CD4-positive, alpha-beta T cell (primary cell): ENCODE measurements at regions of chr18 and their contacts with region 1.

Region 1: DNA sequence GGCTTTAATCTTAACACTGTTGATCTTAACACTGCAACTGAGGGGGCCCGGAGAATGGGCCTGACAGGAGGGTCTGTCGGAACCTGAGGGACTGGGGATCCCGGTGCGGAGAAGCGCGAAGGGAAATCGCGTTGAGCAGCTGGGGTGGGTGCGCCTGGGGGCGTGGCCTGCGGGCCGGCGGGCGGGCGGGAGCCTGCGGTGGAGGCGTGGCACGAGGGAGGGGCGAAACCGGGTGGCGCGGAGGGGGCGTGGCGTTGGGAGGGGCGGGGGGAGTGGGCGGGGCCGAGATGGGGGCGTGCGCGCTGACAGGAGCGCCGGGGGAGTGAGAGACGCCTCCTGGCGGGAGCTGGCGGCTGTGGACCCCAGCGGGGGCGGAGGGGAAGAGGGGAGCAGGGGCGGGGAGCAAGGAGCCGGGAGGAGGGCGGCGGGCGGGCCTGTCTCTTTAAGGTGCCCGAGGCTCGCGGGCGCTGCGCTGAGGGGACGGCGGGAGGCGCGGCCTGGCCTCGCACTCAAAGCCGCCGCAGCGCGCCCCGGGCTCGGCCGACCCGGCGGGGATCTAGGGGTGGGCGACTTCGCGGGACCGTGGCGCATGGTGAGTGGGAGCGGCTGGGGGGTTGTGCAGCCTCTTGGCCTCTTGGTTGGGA is at the start of gene TWSG1:
- DNase-seq: peak; percentile 89 to 96 (median 93)
- ATAC-seq: peak; percentile 88
- H3K4me3 ChIP-seq: peak within 1 kb of the TSS; percentile 80
- H3K4me3 Mint-ChIP-seq: peak within 1 kb of the TSS; percentile 95
- H3K27ac ChIP-seq: peak within 1 kb of the TSS; percentile 36 to 40
- H3K27ac Mint-ChIP-seq: peak within 1 kb of the TSS; percentile 88
- H3K4me1 ChIP-seq: peaks cover 13% of the 10 kb centered on the region
- H3K4me1 Mint-ChIP-seq: peaks cover 25% of the 10 kb centered on the region
- H3K27me3 ChIP-seq: no peaks in the 10 kb centered on the region
- H3K27me3 Mint-ChIP-seq: no peaks in the 10 kb centered on the region
- CTCF ChIP-seq: peak; percentile 35
- total RNA-seq, gene TWSG1: 2.8 TPM

Region 2: GRCh38 chr18:8704361-8705279 is 629.8 kb before region 1 on chr18:
- CTCF ChIA-PET with region 1: no interaction called
- POLR2A ChIA-PET with region 1: no interaction called
- intact Hi-C with region 1: loop called in 1 of 2 experiments (anchors 5 kb)
- DNase-seq: peak; percentile 65 to 93 (median 86)
- ATAC-seq: peak; percentile 90
- H3K4me3 ChIP-seq: peak overlapping the region; percentile 87
- H3K4me3 Mint-ChIP-seq: peak overlapping the region; percentile 91
- H3K27ac ChIP-seq: no peak overlapping the region
- H3K27ac Mint-ChIP-seq: no peak overlapping the region
- H3K4me1 ChIP-seq: peaks cover 28% of the 10 kb centered on the region
- H3K4me1 Mint-ChIP-seq: peaks cover 22% of the 10 kb centered on the region
- H3K27me3 ChIP-seq: peaks cover 53 to 59% of the 10 kb centered on the region in 2 experiments
- H3K27me3 Mint-ChIP-seq: peaks cover 81% of the 10 kb centered on the region
- CTCF ChIP-seq: no peak

Region 3: GRCh38 chr18:9102508-9103375 is 231.7 kb before region 1 on chr18 and contains the start of gene NDUFV2:
- CTCF ChIA-PET with region 1: no interaction called
- POLR2A ChIA-PET with region 1: interaction called, 9 read pairs
- intact Hi-C with region 1: loop called (anchors 2 to 10 kb)
- DNase-seq: peak; percentile 93 to 99 (median 98)
- ATAC-seq: peak; percentile 87
- H3K4me3 ChIP-seq: peak within 1 kb of the TSS; percentile 74
- H3K4me3 Mint-ChIP-seq: peak within 1 kb of the TSS; percentile 95
- H3K27ac ChIP-seq: peak within 1 kb of the TSS; percentile 82 to 91
- H3K27ac Mint-ChIP-seq: peak within 1 kb of the TSS; percentile 90
- H3K4me1 ChIP-seq: peaks cover 22% of the 10 kb centered on the region
- H3K4me1 Mint-ChIP-seq: peaks cover 65% of the 10 kb centered on the region
- H3K27me3 ChIP-seq: no peaks in the 10 kb centered on the region
- H3K27me3 Mint-ChIP-seq: no peaks in the 10 kb centered on the region
- CTCF ChIP-seq: no peak
- total RNA-seq, gene NDUFV2: 230 to 231 TPM

Region 4: DNA sequence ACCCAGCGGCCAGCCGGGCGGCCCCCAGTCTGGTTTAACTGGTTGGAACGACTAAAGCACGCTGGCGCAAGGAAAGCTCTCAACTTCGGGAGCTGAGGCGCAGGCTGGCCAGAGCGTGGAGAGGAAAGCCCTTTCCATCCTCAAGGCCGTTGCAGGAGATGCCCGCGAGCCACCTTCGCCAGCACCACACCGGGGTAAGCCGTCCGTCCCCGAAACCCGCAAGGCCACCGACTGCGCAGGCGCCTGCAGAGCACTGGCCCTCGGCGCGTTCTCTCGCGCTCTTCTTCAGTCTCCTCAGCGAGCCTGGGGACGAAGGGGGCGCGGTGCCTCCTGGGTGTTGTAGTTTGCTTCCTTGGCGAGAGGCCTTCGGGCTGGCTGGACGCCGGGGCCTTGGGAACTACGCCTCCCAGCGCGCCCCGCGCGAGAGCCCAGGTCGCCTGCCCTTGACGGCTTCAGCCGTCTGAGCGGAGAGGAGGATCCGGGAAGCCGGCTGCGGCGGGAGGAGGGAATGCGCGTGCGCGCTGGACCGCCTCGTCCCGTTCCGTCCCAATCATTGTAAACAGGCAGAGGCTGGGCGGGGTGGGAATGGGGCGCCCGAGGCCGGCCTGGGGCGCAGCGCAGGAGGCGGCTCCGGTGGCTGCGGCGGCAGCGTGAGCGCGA is 140.7 kb after region 1 on chr18 and contains the start of gene RALBP1:
- CTCF ChIA-PET with region 1: interaction called, 3 read pairs
- POLR2A ChIA-PET with region 1: interaction called, 10 read pairs
- intact Hi-C with region 1: loop called (anchors 1 kb)
- DNase-seq: peak; percentile 93 to 99 (median 97)
- ATAC-seq: peak; percentile 98
- H3K4me3 ChIP-seq: peak within 1 kb of the TSS; percentile 72
- H3K4me3 Mint-ChIP-seq: peak within 1 kb of the TSS; percentile 98
- H3K27ac ChIP-seq: peak within 1 kb of the TSS; percentile 57 to 59
- H3K27ac Mint-ChIP-seq: peak within 1 kb of the TSS; percentile 92
- H3K4me1 ChIP-seq: peaks cover 25% of the 10 kb centered on the region
- H3K4me1 Mint-ChIP-seq: peaks cover 33% of the 10 kb centered on the region
- H3K27me3 ChIP-seq: no peaks in the 10 kb centered on the region
- H3K27me3 Mint-ChIP-seq: peaks cover 4% of the 10 kb centered on the region
- CTCF ChIP-seq: no peak
- total RNA-seq, gene RALBP1: 6.5 to 7.8 TPM

Region 5: GRCh38 chr18:9614401-9615279 is 280.2 kb after region 1 on chr18 and contains the start of gene PPP4R1:
- CTCF ChIA-PET with region 1: no interaction called
- POLR2A ChIA-PET with region 1: interaction called, 5 read pairs
- intact Hi-C with region 1: loop called in 1 of 2 experiments (anchors 5 kb)
- DNase-seq: peak; percentile 40 to 86 (median 66)
- ATAC-seq: peak; percentile 53
- H3K4me3 ChIP-seq: peak within 1 kb of the TSS; percentile 79
- H3K4me3 Mint-ChIP-seq: peak within 1 kb of the TSS; percentile 97
- H3K27ac ChIP-seq: peak within 1 kb of the TSS; percentile 33 to 53
- H3K27ac Mint-ChIP-seq: peak within 1 kb of the TSS; percentile 88
- H3K4me1 ChIP-seq: peaks cover 21% of the 10 kb centered on the region
- H3K4me1 Mint-ChIP-seq: peaks cover 37% of the 10 kb centered on the region
- H3K27me3 ChIP-seq: no peaks in the 10 kb centered on the region
- H3K27me3 Mint-ChIP-seq: no peaks in the 10 kb centered on the region
- CTCF ChIP-seq: no peak
- total RNA-seq, gene PPP4R1: 35.7 to 40.2 TPM